Posterior vena cava (tissue), 2 donors: ENCODE measurements at regions of chr16 and their contacts with region 1.

Region 1: DNA sequence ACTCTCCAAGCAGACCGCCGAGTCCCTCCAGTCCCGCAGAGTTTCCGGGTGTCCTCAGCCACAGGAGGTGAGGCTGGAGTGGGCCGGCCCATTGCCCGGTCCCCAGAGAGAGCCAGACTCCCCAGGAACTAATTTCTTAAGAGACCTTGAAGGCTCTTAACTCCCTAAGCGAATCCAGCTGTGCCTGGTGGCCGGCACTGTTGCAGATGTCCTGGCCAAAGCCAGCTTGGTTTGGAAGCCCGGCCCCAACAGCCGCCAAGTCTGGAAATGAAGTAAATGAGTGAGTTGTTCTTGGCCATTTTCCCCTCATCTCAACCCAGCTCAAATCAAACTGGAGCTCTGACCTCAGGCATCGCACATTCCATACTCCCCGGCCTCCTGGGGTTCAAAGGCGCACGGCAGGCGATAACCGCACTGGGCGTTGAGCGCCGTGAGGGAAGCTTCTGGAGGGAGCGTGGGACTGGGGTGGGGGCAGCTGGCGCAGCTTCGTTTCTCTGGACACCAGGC is 42.0 kb downstream of the CMIP start:
- DNase-seq: peak; percentile 93

Region 2: DNA sequence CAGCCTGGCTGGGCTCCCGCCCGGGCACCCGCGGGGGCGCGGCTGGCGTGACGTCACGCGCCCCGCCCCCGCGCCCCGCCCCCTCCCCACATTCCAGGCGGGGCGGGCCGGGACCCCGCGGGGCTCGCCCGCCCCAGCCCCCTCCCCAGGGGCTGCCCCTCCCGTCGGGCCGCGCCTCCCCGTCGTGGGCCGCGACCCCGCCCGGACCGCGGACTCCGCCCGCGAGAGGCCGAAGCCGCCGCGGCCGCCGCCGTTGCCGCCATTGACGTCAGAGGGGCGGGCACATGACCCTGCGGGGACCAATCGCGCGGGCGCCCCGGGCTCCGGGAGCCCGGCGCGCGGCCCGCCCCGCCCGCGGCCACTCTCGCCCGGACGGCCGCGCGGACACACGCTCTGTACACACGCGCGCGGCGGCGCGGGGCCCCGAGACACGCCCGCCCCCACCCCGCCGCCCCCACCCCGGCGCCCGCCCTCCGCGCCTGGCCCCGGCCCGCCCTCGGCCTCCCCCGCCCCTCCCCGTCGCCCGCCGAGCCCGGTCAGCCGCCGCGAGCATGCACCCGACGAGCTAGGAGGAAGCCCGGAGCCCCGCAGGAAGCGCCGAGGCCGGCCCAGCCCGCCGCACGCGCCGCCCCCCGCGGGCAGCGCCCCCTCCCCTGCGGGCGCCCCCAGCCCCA is 42.0 kb before region 1 on chr16 and contains the start of gene CMIP:
- intact Hi-C with region 1: no loop called
- DNase-seq: peak; percentile 95
- total RNA-seq, gene CMIP: 38.2 to 45.2 TPM

Region 3: GRCh38 chr16:81551151-81551808 is 64.7 kb after region 1 on chr16:
- intact Hi-C with region 1: loop called in 1 of 2 experiments (anchors 1 kb)
- DNase-seq: no peak

Region 4: DNA sequence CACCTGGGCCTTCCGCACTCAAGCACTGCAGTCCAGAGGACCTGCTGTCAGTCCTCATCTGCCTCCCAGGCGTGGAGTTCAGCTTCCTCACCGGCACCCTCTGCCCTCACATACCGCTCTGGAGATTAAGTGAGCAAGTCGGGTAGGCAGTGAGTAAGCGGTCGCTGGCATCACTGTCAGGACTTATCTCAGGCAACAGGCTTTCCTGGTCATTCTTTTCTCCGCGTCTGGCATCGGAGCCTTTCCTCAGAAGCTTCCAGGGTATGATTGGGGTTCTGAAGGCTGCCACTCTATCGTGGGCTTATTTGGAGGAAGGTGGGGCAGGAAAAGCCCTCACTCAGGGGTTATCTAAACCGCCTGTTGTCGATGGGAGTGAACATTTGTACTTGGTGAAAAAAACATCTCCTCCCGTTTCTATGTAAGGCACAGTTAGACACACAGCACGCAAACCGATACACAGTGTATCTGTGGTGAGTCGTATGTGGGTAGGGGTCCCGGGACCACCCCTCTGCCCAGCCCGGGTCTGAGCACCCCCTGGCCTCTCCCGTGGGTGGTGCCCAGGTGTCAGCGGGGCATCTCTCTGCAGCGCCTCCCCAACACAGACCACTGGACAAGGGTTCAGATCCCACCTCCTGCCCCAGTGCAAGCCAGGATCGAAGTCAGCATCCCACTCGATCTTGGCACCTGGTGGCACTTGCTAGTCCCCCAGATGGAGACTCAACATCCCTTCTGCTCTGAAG is 200.0 kb after region 1 on chr16:
- intact Hi-C with region 1: no loop called
- DNase-seq: no peak